Naive thymus-derived CD4-positive, alpha-beta T cell (primary cell): ENCODE measurements at regions of chr6 and their contacts with region 1.

Region 1: DNA sequence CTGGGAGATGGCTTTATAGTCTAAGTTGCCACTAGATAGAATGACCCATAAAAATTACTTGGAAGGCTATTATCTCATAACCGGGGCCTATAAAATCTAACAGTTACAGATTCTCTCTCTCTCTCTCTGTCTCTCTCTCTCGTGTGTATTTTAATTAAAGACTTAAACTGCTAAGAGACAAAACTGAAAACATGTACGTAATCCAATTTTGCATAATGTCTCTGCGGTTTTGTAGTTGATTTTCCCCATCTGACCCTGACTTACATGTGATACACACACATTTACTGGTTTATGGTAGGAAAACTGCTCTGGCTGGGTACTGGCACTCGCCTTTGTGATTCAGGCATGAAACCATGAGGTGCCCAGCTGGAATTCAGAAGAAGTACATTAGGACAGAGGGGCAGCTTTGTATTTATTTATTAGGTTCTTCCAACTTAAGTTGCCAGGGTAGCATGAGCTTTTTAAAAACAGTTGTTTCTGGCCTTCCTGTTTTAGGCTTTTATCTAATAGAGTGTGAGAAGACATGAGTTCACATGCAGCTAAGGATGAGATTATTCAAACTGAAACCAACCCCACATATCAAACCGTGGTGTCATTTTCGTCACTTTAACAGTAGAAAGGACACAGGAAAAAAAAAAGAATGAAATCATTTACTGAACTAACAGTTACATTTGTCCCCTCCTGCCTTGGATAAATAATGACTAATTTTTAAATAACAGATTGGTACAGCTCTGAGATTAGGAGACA is 182.5 kb downstream of the GMPR start:
- DNase-seq: peak in 7 of 9 donors; percentile 22 to 52 (median 34)
- ATAC-seq: peak; percentile 80
- H3K4me3 ChIP-seq: peak overlapping the region; percentile 31
- H3K4me3 Mint-ChIP-seq: peak overlapping the region in 9 of 10 donors; percentile 59 to 84 (median 69)
- H3K27ac ChIP-seq: peak overlapping the region; percentile 70
- H3K27ac Mint-ChIP-seq: peak overlapping the region; percentile 72 to 99 (median 92)
- H3K4me1 ChIP-seq: peaks cover 16 to 31% of the 10 kb centered on the region in 2 donors
- H3K4me1 Mint-ChIP-seq: peaks cover 16 to 60% (median 37%) of the 10 kb centered on the region in 7 donors
- H3K27me3 ChIP-seq: no peaks in the 10 kb centered on the region
- H3K27me3 Mint-ChIP-seq: no peaks in the 10 kb centered on the region

Region 2: DNA sequence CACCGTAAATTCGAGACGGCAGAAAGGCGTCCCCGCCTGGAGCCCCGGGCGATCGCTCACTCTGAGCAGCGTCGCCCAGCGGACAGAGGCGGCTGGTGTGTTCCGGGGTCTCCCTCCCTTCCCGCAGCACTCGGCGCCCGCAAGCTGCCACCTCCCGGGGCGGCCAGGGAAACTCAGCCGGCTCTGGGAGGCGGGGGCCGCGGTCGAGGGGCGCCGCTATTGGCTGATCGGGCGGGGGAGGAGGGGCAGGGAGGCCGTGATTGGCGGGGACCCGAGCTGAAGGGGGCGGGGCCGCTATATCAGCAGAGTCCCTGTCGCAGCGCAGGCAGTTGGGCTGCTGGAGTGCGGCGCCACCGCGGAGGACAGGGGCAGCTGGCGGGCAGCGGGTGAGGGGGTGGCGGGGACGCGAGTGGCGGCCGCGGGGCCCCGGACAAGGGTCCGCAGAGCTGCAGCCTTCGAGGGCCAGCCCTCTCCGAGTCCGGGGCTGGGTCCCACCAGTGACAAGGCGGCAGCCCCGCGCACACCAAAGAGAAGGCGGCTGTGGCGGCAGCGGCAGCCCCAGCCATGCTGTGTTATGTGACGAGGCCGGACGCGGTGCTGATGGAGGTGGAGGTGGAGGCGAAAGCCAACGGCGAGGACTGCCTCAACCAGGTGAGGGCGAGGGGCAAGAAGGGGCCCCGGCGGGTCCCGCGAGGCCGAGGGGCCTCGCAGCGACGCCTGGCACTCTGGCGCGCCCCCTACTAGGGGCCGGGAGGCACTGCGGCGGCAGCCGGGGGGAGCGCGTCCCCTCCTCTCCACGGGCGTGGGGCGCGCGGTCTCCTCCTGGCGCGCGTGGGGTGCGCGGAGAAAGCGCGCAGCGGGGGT is 291.9 kb before region 1 on chr6 and contains the start of gene MYLIP:
- CTCF ChIA-PET with region 1: no interaction called
- POLR2A ChIA-PET with region 1: no interaction called
- intact Hi-C with region 1: no loop called
- DNase-seq: peak; percentile 93 to 97 (median 96)
- ATAC-seq: peak; percentile 93
- H3K4me3 ChIP-seq: peak within 1 kb of the TSS; percentile 91
- H3K4me3 Mint-ChIP-seq: peak within 1 kb of the TSS; percentile 93 to 100 (median 96)
- H3K27ac ChIP-seq: peak within 1 kb of the TSS; percentile 97
- H3K27ac Mint-ChIP-seq: peak within 1 kb of the TSS; percentile 76 to 98 (median 95)
- H3K4me1 ChIP-seq: peaks cover 30 to 39% of the 10 kb centered on the region in 2 donors
- H3K4me1 Mint-ChIP-seq: peaks cover 20 to 50% (median 35%) of the 10 kb centered on the region in 7 donors
- H3K27me3 ChIP-seq: no peaks in the 10 kb centered on the region
- H3K27me3 Mint-ChIP-seq: peaks cover 0 to 25% (median 0%) of the 10 kb centered on the region in 5 donors
- total RNA-seq, gene MYLIP: 17.8 to 215 (median 23.0) TPM

Region 3: DNA sequence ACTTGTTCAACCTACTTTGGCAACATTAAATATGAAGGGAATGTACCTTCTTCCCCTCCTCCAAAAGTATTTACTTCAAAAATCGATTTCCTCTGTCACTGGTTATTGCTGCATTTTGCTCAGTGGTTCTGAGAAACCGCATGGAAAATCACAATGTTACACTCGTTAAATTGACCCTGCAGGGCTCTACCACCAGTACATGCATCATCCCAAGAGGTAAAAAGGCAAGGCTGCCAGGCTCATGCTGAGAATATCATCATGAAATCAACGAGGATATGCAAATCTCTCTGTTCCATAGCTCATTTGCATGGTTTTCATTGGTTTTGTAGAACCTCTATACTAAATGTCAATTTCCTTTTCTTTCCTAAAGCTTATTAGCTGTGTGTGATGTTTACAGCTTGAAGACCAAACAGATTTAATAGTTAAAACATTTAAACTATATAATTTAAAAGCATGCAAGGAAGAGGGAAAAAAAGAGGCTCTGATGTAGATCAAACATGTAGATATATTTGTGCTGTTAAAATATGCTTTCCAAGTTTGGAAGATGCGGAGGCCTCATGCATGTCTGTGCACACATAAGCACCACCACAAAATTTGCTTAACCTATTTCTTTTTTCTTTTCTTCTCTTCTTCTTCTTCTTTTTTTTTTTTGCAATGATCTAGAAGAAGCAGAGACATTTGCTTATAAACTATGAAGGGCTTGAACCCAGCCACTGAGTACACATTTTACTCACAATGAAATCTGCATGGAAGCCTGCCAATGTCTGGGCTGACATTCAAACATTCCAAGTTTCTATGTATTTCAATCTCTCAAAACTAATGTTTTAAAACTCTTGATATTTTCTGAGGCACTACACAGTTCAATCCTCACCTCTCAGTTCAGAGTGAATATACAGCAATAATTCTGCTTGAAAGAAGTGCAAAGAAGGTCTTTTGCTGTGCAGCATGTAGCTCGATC is 11.5 kb after region 1 on chr6:
- CTCF ChIA-PET with region 1: no interaction called
- POLR2A ChIA-PET with region 1: no interaction called
- intact Hi-C with region 1: loop called in 1 of 2 experiments (anchors 1 kb)
- DNase-seq: no peak
- ATAC-seq: no peak
- H3K4me3 ChIP-seq: no peak overlapping the region
- H3K4me3 Mint-ChIP-seq: no peak overlapping the region
- H3K27ac ChIP-seq: no peak overlapping the region
- H3K27ac Mint-ChIP-seq: no peak overlapping the region
- H3K4me1 ChIP-seq: peaks cover 11 to 22% of the 10 kb centered on the region in 2 donors
- H3K4me1 Mint-ChIP-seq: peaks cover 12 to 55% (median 22%) of the 10 kb centered on the region in 7 donors
- H3K27me3 ChIP-seq: no peaks in the 10 kb centered on the region
- H3K27me3 Mint-ChIP-seq: no peaks in the 10 kb centered on the region

Region 4: DNA sequence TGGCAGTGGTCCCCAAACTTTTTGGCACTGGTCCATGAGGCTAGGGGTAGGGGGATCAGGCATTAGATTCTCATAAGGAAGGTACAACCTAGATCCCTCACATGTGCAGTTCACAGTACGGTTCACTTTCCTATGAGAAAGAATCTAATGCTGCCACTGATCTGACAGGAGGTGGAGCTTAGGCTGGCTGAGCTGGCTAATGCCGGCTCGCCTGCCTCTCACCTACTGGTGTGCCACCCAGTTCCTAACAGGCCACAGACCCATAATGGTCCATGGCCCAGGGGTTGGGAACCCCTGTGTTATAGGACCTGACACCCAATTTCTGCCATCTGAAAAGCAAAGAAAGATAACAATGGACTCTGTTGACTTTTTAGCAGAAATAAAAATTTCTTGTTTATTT is 17.1 kb after region 1 on chr6:
- CTCF ChIA-PET with region 1: no interaction called
- POLR2A ChIA-PET with region 1: no interaction called
- intact Hi-C with region 1: loop called in 1 of 2 experiments (anchors 1 kb)
- DNase-seq: no peak
- ATAC-seq: peak; percentile 45
- H3K4me3 ChIP-seq: peak overlapping the region; percentile 40
- H3K4me3 Mint-ChIP-seq: peak overlapping the region in 3 of 10 donors; percentile 8 to 77 (median 17)
- H3K27ac ChIP-seq: no peak overlapping the region
- H3K27ac Mint-ChIP-seq: peak overlapping the region in 1 of 9 donors; percentile 91
- H3K4me1 ChIP-seq: peaks cover 15 to 39% of the 10 kb centered on the region in 2 donors
- H3K4me1 Mint-ChIP-seq: peaks cover 21 to 76% (median 45%) of the 10 kb centered on the region in 7 donors
- H3K27me3 ChIP-seq: no peaks in the 10 kb centered on the region
- H3K27me3 Mint-ChIP-seq: no peaks in the 10 kb centered on the region

Region 5: DNA sequence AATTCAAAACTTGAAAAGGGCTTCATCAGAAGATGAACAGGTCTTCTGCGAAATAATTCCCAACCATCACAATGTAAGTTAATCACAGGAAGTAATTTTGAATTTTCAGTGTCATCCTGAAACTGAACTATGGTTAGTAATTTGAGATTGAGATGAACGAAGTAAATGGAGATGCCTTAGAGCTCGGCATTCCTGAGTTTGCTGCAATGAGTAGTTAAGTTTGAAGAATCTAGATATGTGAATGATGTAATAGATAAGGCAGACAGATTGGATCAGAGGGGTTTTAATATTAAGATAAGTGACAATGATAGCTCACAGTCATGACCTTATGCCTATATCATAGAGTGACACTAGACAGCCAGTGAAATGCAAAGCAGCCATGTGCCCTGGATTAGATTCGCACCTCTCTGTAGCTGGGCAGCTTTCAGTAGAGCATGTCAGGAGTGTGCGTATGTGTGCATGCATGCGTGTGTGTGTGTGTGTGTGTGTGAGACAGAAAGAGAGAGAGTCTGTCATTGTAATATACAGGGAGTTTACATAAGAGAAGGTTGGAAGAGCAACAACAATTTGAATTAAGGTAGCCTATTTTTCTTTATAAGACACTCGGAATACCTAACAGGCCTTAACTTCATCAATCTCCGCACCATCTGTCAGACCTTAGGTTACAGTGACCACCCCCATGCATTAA is 50.5 kb after region 1 on chr6:
- CTCF ChIA-PET with region 1: no interaction called
- POLR2A ChIA-PET with region 1: no interaction called
- intact Hi-C with region 1: loop called in 1 of 2 experiments (anchors 1 kb)
- DNase-seq: no peak
- ATAC-seq: no peak
- H3K4me3 ChIP-seq: no peak overlapping the region
- H3K4me3 Mint-ChIP-seq: peak overlapping the region in 1 of 10 donors; percentile 43
- H3K27ac ChIP-seq: no peak overlapping the region
- H3K27ac Mint-ChIP-seq: peak overlapping the region in 5 of 9 donors; percentile 6 to 68 (median 22)
- H3K4me1 ChIP-seq: peaks cover 25 to 48% of the 10 kb centered on the region in 2 donors
- H3K4me1 Mint-ChIP-seq: peaks cover 23 to 70% (median 37%) of the 10 kb centered on the region in 7 donors
- H3K27me3 ChIP-seq: no peaks in the 10 kb centered on the region
- H3K27me3 Mint-ChIP-seq: no peaks in the 10 kb centered on the region

Region 6: DNA sequence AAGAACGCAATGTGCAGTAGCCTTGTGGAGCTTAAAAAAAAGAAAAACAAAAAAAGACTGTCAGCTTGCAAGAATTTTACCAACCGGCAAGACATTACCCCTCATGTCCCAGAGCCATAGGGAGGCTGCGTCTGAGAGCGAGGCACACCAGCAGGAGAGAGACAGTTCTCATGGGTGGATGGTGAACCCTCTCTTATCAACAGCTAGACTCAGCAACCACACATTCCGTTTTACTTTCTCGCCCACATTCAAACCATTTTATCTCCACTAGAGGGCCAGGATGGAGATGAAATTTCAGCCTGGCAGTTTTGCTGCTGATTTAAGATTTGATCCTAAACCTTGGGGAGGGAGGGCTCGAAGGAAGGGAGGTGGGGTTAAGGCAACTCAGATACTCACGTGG is 93.4 kb after region 1 on chr6:
- CTCF ChIA-PET with region 1: no interaction called
- POLR2A ChIA-PET with region 1: no interaction called
- intact Hi-C with region 1: loop called (anchors 5 kb)
- DNase-seq: peak in 6 of 9 donors; percentile 16 to 31 (median 24)
- ATAC-seq: peak; percentile 59
- H3K4me3 ChIP-seq: no peak overlapping the region
- H3K4me3 Mint-ChIP-seq: peak overlapping the region in 1 of 10 donors; percentile 41
- H3K27ac ChIP-seq: no peak overlapping the region
- H3K27ac Mint-ChIP-seq: peak overlapping the region in 7 of 9 donors; percentile 10 to 56 (median 40)
- H3K4me1 ChIP-seq: peaks cover 14 to 29% of the 10 kb centered on the region in 2 donors
- H3K4me1 Mint-ChIP-seq: peaks cover 29 to 73% (median 58%) of the 10 kb centered on the region in 7 donors
- H3K27me3 ChIP-seq: no peaks in the 10 kb centered on the region
- H3K27me3 Mint-ChIP-seq: no peaks in the 10 kb centered on the region

Region 7: DNA sequence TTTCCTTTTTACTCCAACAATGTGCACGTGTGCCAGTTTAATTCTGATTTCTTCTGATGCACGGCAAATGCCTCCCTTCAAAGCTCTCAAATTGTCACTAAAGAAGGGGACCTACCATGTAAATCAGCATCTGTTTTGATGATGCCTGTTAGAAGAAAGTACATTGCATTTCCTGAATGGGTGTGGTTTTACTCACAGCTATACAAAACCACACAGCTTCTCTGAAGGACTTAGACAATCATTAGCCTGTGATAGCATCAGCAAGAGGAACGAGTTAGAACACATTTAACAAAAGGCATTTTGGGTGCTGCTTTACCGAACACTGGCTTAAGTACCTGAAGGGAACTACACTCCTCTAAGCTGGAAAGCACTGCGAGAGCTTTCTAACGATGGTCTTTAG is 231.0 kb after region 1 on chr6:
- CTCF ChIA-PET with region 1: no interaction called
- POLR2A ChIA-PET with region 1: no interaction called
- intact Hi-C with region 1: loop called in 1 of 2 experiments (anchors 5 kb)
- DNase-seq: peak in 7 of 9 donors; percentile 4 to 55 (median 27)
- ATAC-seq: peak; percentile 88
- H3K4me3 ChIP-seq: no peak overlapping the region
- H3K4me3 Mint-ChIP-seq: peak overlapping the region in 3 of 10 donors; percentile 33 to 68 (median 41)
- H3K27ac ChIP-seq: no peak overlapping the region
- H3K27ac Mint-ChIP-seq: peak overlapping the region in 5 of 9 donors; percentile 0 to 86 (median 12)
- H3K4me1 ChIP-seq: peaks cover 11 to 48% of the 10 kb centered on the region in 2 donors
- H3K4me1 Mint-ChIP-seq: peaks cover 20 to 63% (median 24%) of the 10 kb centered on the region in 7 donors
- H3K27me3 ChIP-seq: no peaks in the 10 kb centered on the region
- H3K27me3 Mint-ChIP-seq: no peaks in the 10 kb centered on the region